Tibial artery (tissue), 4 donors: ENCODE measurements at regions of chr11 and their contacts with region 1.

Region 1: DNA sequence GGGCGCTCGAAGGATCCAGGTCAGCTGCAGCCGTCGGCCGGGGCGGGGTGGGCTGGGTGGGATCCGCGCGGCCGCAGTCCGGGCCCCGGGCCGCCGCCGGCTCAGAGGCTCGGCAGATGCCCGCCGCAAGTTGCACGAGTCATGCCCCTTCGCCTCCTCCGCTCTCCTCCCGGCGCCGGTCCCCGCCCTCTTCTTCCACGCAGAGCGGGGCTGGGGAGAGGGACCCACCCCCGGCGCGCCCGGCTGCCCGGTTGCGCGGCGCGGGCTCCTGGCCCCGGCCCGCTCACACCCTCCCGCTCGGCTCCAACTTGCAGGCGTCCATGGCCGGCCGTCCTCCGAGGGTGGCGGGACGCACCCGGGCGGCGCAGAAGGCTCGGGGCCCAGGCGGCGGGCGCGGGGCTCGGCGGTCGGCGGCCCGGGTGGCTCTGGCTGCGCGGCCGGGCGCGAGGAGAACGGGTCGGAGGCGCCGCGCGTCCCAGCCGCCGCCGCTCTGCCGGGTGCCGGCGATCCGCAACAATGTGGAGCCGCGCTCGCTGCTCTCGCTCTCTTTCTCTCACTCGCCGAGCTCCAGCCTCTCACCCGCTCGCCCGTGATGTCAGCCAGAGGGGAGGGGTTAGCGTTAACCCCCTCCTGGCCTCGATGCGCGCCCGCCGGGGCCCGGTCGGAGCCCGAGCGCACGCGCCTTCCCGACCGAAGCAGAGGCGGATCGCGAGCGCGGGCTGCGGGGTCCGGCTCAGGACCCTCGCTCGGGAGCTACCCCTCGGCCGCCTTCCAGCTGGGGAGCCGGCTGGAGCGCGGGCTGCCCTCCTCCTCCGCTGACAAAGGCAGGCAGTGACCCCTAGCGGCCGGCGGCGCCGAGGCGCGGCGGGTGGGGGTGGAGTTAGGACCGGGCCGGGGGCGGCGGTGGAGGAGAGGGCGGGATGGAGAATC is at the start of gene NECTIN1:
- DNase-seq: peak; percentile 86 to 92
- H3K4me3 ChIP-seq: peak within 1 kb of the TSS; percentile 75 to 91
- H3K27ac ChIP-seq: peak within 1 kb of the TSS; percentile 80 to 84
- H3K4me1 ChIP-seq: peaks cover 0 to 30% (median 18%) of the 10 kb centered on the region in 4 donors
- H3K27me3 ChIP-seq: peaks cover 0 to 3% of the 10 kb centered on the region in 2 donors
- CTCF ChIP-seq: peak; percentile 84 to 96

Region 2: GRCh38 chr11:119481021-119481666 is 247.8 kb before region 1 on chr11:
- intact Hi-C with region 1: loop called (anchors 10 kb)
- DNase-seq: peak; percentile 87 to 91
- H3K4me3 ChIP-seq: no peak overlapping the region
- H3K27ac ChIP-seq: no peak overlapping the region
- H3K4me1 ChIP-seq: peaks cover 0 to 10% (median 7%) of the 10 kb centered on the region in 4 donors
- H3K27me3 ChIP-seq: peaks cover 0 to 30% of the 10 kb centered on the region in 2 donors
- CTCF ChIP-seq: peak; percentile 88 to 93

Region 3: GRCh38 chr11:119496469-119496868 is 232.4 kb before region 1 on chr11:
- intact Hi-C with region 1: no loop called
- DNase-seq: no peak
- H3K4me3 ChIP-seq: no peak overlapping the region
- H3K27ac ChIP-seq: no peak overlapping the region
- H3K4me1 ChIP-seq: no peaks in the 10 kb centered on the region
- H3K27me3 ChIP-seq: peaks cover 0 to 38% of the 10 kb centered on the region in 2 donors
- CTCF ChIP-seq: no peak

Region 4: GRCh38 chr11:119666463-119667131 is 62.3 kb before region 1 on chr11:
- intact Hi-C with region 1: loop called (anchors 5 kb)
- DNase-seq: peak; percentile 65 to 83
- H3K4me3 ChIP-seq: no peak overlapping the region
- H3K27ac ChIP-seq: no peak overlapping the region
- H3K4me1 ChIP-seq: peaks cover 0 to 16% (median 7%) of the 10 kb centered on the region in 4 donors
- H3K27me3 ChIP-seq: no peaks in the 10 kb centered on the region
- CTCF ChIP-seq: peak; percentile 97

Region 5: DNA sequence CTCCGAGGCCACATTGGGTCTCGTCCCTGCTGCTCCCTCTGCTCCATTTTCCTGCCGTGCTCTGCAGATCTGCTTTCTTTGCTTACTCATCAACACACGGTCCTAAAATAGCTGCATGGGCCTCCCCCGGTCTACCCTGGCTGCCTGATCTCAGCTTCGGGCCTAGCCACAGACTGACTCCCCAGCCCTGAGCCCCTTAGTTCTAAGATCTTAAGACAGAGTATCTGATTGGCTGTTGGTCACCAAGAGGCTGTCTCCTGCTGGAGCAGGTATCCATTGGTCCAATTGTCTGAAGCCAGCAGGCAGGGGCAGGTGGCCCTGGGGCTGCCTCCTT is 53.8 kb after region 1 on chr11:
- intact Hi-C with region 1: no loop called
- DNase-seq: no peak
- H3K4me3 ChIP-seq: no peak overlapping the region
- H3K27ac ChIP-seq: no peak overlapping the region
- H3K4me1 ChIP-seq: peaks cover 0 to 20% (median 4%) of the 10 kb centered on the region in 4 donors
- H3K27me3 ChIP-seq: peaks cover 0 to 7% of the 10 kb centered on the region in 2 donors
- CTCF ChIP-seq: no peak